Mammary epithelial cell (primary cell): ENCODE measurements at regions of chr19 and their contacts with region 1.

Region 1: DNA sequence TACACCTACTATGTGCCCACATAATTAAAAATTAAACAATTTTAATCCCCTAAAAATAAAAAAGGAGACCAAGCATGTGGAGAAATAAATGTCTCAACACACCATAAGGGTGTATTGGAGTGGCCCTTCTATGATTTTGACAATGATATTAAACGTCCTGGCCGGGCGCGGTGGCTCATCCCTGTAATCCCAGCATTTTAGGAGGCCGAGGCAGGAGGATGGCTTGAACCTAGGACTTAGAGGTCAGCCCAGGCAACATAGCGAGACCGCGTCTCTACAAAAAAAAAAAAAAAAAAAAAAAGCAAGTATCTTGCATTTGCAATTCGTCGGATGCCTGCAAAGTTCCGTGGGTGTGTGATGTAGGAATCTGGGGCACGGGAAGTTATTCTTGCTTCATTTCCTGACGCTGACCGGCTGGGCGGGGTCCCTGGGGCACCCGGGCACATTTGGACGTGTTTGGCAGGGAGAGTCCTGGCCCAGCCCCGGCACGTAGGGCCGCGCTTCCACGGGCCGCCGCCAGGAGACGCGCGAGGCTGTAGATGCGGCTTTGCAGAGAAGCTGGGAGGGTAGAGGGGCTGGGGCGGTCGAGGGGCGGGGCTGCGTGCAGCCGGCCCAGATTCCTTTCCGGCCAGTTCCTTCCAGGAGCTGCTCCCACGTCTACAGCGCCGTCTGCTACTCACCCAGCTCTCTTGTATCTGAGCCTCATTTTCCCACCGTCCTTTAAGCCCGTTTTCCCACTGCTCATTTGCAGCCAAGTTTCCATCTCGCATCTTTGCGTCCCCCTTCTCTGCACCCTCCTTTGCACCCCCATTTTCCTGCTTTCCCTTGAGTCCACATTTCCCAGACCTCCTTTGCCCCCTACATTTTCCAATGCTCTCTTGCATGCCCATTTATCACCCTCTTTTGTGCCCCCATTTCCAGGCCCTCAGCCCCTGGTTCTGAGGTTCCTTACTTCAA is 2.2 kb upstream of the TSPAN16 start:
- DNase-seq: peak; percentile 93
- H3K4me3 ChIP-seq: peak overlapping the region in 2 of 3 experiments; percentile 33
- H3K27ac ChIP-seq: peak overlapping the region; percentile 38
- H3K4me1 ChIP-seq: peaks cover 7% of the 10 kb centered on the region
- H3K27me3 ChIP-seq: no peaks in the 10 kb centered on the region
- CTCF ChIP-seq: peak; percentile 88 to 99

Region 2: GRCh38 chr19:11252665-11253355 is 40.9 kb before region 1 on chr19:
- CTCF ChIA-PET with region 1: no interaction called
- dilution Hi-C with region 1: no loop called
- in situ Hi-C with region 1: no loop called
- intact Hi-C with region 1: no loop called
- DNase-seq: no peak
- H3K4me3 ChIP-seq: no peak overlapping the region
- H3K27ac ChIP-seq: no peak overlapping the region
- H3K4me1 ChIP-seq: no peaks in the 10 kb centered on the region
- H3K27me3 ChIP-seq: no peaks in the 10 kb centered on the region
- CTCF ChIP-seq: no peak

Region 3: GRCh38 chr19:11339254-11340098 is 45.8 kb after region 1 on chr19 and contains the start of gene RAB3D:
- CTCF ChIA-PET with region 1: no interaction called
- dilution Hi-C with region 1: no loop called
- in situ Hi-C with region 1: no loop called
- intact Hi-C with region 1: loop called (anchors 2 kb)
- DNase-seq: peak; percentile 75
- H3K4me3 ChIP-seq: peak within 1 kb of the TSS; percentile 65 to 95 (median 72)
- H3K27ac ChIP-seq: no peak within 1 kb of the TSS
- H3K4me1 ChIP-seq: peaks cover 22% of the 10 kb centered on the region
- H3K27me3 ChIP-seq: no peaks in the 10 kb centered on the region
- CTCF ChIP-seq: no peak
- total RNA-seq, gene RAB3D: 27.8 to 50.2 TPM

Region 4: GRCh38 chr19:11380653-11381534 is 87.2 kb after region 1 on chr19:
- CTCF ChIA-PET with region 1: interaction called, 15 read pairs
- dilution Hi-C with region 1: loop called (anchors 5 kb)
- in situ Hi-C with region 1: no loop called
- intact Hi-C with region 1: loop called (anchors 1 kb)
- DNase-seq: peak; percentile 98
- H3K4me3 ChIP-seq: peak overlapping the region; percentile 57 to 66 (median 64)
- H3K27ac ChIP-seq: peak overlapping the region; percentile 88
- H3K4me1 ChIP-seq: peaks cover 45% of the 10 kb centered on the region
- H3K27me3 ChIP-seq: no peaks in the 10 kb centered on the region
- CTCF ChIP-seq: peak; percentile 32 to 73

Region 5: GRCh38 chr19:11399667-11400066 is 106.0 kb after region 1 on chr19:
- CTCF ChIA-PET with region 1: no interaction called
- dilution Hi-C with region 1: no loop called
- in situ Hi-C with region 1: no loop called
- intact Hi-C with region 1: no loop called
- DNase-seq: no peak
- H3K4me3 ChIP-seq: no peak overlapping the region
- H3K27ac ChIP-seq: no peak overlapping the region
- H3K4me1 ChIP-seq: no peaks in the 10 kb centered on the region
- H3K27me3 ChIP-seq: no peaks in the 10 kb centered on the region
- CTCF ChIP-seq: no peak

Region 6: DNA sequence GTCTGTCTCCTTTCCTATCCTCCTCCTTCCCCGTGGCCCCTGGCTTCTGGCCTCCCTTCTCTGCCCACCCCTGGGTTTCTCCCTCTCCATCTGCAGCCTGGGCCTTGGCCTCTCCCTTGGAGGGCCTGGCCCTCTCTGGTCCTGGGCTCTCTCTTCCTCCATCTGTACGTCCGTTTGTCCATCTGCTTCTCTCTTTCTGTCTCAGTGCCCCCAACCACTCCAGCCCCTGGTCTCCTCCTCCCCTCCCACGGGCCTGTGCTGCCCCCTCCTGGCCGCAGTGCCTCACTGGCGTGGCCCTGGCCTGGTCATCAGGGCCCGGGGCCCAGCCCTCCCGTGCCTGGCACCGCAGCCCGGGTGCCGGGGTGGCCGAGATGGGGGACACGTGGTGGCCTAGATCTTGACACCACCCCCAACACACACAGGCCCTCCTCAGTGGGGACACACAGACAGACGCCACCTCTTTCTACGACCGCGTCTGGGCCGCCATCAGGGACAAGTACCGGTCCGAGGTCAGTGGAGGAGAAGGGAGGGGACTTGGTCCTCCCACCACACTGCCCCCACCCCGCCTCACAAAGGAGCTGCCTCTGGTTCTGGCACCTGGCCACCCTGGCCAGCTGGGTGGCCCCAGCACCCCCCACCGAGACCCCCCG is 153.1 kb after region 1 on chr19:
- CTCF ChIA-PET with region 1: no interaction called
- dilution Hi-C with region 1: no loop called
- in situ Hi-C with region 1: no loop called
- intact Hi-C with region 1: loop called (anchors 1 kb)
- DNase-seq: no peak
- H3K4me3 ChIP-seq: no peak overlapping the region
- H3K27ac ChIP-seq: no peak overlapping the region
- H3K4me1 ChIP-seq: peaks cover 16% of the 10 kb centered on the region
- H3K27me3 ChIP-seq: no peaks in the 10 kb centered on the region
- CTCF ChIP-seq: peak; percentile 51 to 75

Region 7: DNA sequence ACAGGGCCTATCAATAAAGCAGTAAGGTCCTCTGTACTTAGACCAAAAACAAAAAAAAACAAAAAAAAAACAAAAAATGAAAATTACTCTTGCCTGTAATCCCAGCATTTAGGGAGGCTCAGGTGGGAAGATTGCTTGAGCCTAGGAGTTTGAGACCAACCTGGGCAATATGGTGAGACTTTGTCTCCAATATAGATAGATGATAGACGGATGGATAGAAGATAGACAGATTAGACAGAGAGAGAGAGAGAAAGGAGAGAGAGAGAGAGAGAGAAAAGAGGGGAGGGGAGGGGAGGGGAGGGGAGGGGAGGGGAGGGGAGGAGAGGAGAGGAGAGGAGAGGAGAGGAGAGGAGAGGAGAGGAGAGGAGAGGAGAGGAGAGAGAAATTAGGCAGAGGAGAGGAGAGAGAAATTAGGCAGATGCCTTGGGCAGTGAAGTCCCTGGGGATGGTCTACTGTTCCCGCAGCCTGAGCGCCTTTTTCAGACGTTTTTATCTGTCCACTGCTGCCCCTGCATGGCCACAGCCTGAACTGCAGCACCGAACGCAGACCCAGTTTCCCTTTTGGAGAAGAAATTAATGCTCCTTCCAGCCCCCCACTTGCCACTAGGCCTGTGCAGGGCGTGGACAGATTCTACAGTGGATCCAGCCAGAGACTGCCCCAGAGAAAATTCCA is 293.7 kb after region 1 on chr19:
- CTCF ChIA-PET with region 1: no interaction called
- dilution Hi-C with region 1: no loop called
- in situ Hi-C with region 1: no loop called
- intact Hi-C with region 1: loop called (anchors 1 kb)
- DNase-seq: peak; percentile 39
- H3K4me3 ChIP-seq: no peak overlapping the region
- H3K27ac ChIP-seq: no peak overlapping the region
- H3K4me1 ChIP-seq: peaks cover 3% of the 10 kb centered on the region
- H3K27me3 ChIP-seq: no peaks in the 10 kb centered on the region
- CTCF ChIP-seq: peak; percentile 87 to 93